ENCODE measurements at regions of chr11 and their contacts with region 1.

Region 1: GRCh38 chr11:119084663-119085436 is at the start of gene HMBS:
- DNase-seq: peak; percentile 90

Region 2: GRCh38 chr11:119057000-119057769 is 27.7 kb before region 1 on chr11 and contains the start of gene HYOU1:
- CTCF ChIA-PET with region 1: no interaction called
- POLR2A ChIA-PET with region 1: interaction called, 11 read pairs
- DNase-seq: peak; percentile 96

Region 3: GRCh38 chr11:119067371-119068222 is 17.3 kb before region 1 on chr11 and contains the start of gene VPS11:
- CTCF ChIA-PET with region 1: no interaction called
- POLR2A ChIA-PET with region 1: interaction called, 20 read pairs
- DNase-seq: peak; percentile 98

Region 4: GRCh38 chr11:119095066-119095880 is 10.4 kb after region 1 on chr11:
- CTCF ChIA-PET with region 1: no interaction called
- POLR2A ChIA-PET with region 1: interaction called, 47 read pairs
- DNase-seq: peak; percentile 97

Region 5: GRCh38 chr11:119101759-119102423 is 17.0 kb after region 1 on chr11 and contains the start of gene DPAGT1:
- CTCF ChIA-PET with region 1: interaction called, 3 read pairs
- POLR2A ChIA-PET with region 1: interaction called, 19 read pairs
- DNase-seq: peak; percentile 78

Region 6: GRCh38 chr11:119121008-119121810 is 36.4 kb after region 1 on chr11 and contains the start of gene HINFP:
- CTCF ChIA-PET with region 1: no interaction called
- POLR2A ChIA-PET with region 1: interaction called, 12 read pairs
- DNase-seq: peak; percentile 99

Region 7: DNA sequence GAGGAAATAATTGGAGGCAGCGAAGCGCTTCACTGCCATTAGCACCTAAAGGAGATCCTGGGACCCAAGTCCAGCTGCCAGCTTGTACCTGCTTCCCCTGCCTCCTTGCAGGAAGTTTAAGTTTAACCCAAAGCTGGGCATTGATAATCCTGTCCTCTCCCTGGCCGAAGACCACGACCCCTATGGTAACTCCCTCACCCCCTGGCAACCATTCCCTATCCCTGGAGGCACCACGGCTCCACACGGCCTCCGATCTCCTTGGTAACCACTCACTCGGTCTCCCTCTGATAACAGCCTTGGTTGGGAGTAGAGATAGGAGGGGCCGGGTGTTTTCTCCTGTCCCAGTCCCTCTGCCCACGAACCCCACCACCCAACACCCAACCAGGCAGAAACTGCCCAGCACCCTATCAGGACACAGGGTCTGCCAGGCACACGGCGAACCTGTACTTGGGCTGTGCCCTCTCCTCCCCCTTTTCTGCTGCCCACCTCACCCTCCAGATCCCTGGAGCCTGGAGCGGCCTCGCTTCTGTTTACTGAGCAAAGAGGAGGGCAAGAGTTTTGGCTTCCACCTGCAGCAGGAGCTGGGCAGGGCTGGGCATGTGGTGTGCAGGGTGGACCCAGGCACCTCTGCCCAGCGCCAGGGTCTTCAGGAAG is 101.3 kb after region 1 on chr11:
- CTCF ChIA-PET with region 1: interaction called, 11 read pairs
- POLR2A ChIA-PET with region 1: interaction called, 3 read pairs
- DNase-seq: no peak

Region 8: GRCh38 chr11:119373921-119374631 is 289.2 kb after region 1 on chr11:
- CTCF ChIA-PET with region 1: no interaction called
- POLR2A ChIA-PET with region 1: no interaction called
- DNase-seq: peak; percentile 78